WTC11 (cell line): ENCODE measurements at regions of chr19 and their contacts with region 1.

Region 1: DNA sequence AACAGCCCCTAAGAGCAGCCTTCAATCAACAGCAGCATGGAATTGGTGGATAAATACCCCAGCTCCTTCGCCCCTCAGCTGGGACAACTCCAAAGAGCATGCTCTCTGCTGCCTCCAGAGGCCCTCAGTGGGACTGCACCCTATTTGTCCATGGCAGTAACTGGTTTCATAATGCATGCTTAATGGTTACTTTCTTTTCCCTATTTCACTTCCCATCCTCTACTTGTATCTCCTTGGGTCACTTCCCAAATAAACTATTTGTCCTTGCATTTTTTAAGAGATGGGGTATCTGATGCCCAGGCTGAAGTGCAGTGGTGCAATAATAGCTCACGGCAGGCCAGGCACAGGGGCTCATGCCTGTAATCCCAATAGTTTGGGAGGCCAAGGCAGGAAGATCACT is 13.5 kb upstream of the TPM4 start:
- DNase-seq: peak; percentile 84
- ATAC-seq: peak; percentile 76
- H3K4me3 Mint-ChIP-seq: no peak overlapping the region
- H3K27ac Mint-ChIP-seq: no peak overlapping the region
- H3K4me1 Mint-ChIP-seq: peaks cover 16% of the 10 kb centered on the region
- H3K27me3 Mint-ChIP-seq: peaks cover 4% of the 10 kb centered on the region
- CTCF ChIP-seq: peak; percentile 95

Region 2: DNA sequence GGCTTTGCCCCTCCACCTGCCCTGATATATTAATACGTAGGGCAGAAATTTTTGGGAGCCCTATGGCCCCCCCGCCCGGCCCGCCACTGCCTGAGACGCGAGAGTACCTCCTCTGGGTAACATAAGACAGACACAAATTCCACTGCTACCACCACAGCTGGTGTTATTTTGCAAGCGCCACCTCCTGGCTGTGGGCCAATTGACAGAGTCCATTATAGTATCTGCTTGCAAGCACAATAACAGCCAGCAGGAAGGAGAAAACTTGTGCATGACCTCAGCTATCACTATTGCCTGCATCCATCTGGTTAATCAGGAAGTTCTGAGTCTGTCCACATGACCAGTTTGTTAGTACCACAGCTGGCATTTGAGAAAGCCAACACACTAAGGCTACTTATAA is 360.3 kb before region 1 on chr19:
- CTCF ChIA-PET with region 1: no interaction called
- POLR2A ChIA-PET with region 1: no interaction called
- DNase-seq: no peak
- ATAC-seq: no peak
- H3K4me3 Mint-ChIP-seq: no peak overlapping the region
- H3K27ac Mint-ChIP-seq: no peak overlapping the region
- H3K4me1 Mint-ChIP-seq: no peaks in the 10 kb centered on the region
- H3K27me3 Mint-ChIP-seq: peaks cover 5% of the 10 kb centered on the region
- CTCF ChIP-seq: no peak

Region 3: GRCh38 chr19:15863272-15863671 is 199.5 kb before region 1 on chr19:
- CTCF ChIA-PET with region 1: no interaction called
- POLR2A ChIA-PET with region 1: no interaction called
- DNase-seq: no peak
- ATAC-seq: no peak
- H3K4me3 Mint-ChIP-seq: no peak overlapping the region
- H3K27ac Mint-ChIP-seq: no peak overlapping the region
- H3K4me1 Mint-ChIP-seq: no peaks in the 10 kb centered on the region
- H3K27me3 Mint-ChIP-seq: no peaks in the 10 kb centered on the region; the same call in 1 of the 2 replicates
- CTCF ChIP-seq: no peak

Region 4: DNA sequence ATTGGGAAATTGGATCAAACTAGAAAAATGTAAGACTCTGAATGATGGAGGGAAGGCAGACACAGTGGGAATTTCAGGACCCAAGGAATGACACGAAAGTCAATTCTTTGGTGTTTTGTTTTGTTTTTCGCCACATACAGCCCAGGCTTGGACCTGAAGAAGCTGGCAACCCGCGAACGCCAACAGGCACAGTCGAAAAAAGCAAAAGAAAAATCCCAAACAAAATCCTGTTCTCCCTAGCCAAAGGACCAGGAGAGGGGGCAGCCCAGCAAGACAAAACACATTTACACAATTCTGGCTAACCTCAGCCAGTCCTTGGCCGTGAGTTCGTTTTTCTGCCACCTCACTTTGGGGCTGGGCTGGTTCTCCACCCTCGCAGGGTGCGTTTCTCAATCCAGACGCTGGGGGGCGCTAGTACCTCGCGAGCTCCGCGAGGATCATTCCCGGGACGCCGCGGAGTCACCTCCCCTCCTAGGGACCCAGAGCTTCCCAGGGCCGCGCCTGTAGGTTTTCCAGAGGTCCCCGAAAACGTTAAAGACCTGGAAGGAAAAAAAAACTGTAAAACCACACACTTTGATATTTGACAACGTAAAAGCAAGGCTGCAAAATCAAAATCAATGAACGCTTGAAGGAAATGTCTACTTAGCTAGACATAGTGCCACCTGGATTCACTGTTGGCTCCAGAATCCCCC is 21.3 kb before region 1 on chr19:
- CTCF ChIA-PET with region 1: interaction called, 33 read pairs
- POLR2A ChIA-PET with region 1: no interaction called
- DNase-seq: peak; percentile 93
- ATAC-seq: peak; percentile 96
- H3K4me3 Mint-ChIP-seq: peak overlapping the region; percentile 38
- H3K27ac Mint-ChIP-seq: no peak overlapping the region
- H3K4me1 Mint-ChIP-seq: 0 out of 2 replicates have a peak, but pooled peaks cover 3% of the 10 kb centered on the region
- H3K27me3 Mint-ChIP-seq: peaks cover 8% of the 10 kb centered on the region
- CTCF ChIP-seq: peak; percentile 97

Region 5: DNA sequence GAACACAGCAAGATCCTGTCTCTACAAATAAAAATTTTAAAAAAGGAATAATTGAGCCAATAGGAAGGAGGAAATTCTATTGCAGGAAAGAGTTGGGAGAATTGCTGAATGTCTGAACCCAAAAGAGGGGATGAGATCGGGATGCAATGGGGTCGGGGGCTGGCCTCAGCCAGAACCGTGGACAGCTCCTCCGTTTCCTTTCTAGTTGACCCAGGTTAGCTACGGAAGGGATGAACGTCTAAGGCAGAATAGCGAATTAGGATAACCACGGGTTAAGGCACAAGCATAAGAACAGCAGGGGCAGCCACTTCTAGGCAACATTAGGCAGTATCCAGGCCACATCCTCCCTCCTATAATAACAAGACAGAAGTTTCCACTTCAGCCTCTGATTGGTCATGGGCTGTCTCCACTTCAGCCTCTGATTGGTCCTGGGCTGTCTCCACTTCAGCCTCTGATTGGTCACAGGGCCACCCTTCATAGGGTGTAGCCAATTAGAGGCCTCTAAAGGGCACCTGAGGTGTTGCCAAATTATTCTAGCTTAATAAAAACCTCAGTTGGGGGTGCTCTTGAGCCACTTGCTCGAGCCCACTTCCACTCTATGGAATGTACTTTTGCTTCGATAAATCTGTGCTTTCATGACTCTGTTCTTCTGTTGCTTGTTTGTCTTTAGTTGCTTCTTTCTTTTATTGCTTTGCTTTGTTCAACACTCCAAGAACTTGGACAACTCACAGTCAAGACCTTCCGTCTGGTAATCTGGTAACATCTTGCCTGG is 11.3 kb before region 1 on chr19:
- CTCF ChIA-PET with region 1: interaction called, 25 read pairs
- POLR2A ChIA-PET with region 1: no interaction called
- DNase-seq: no peak
- ATAC-seq: peak; percentile 87
- H3K4me3 Mint-ChIP-seq: no peak overlapping the region
- H3K27ac Mint-ChIP-seq: no peak overlapping the region
- H3K4me1 Mint-ChIP-seq: no peaks in the 10 kb centered on the region
- H3K27me3 Mint-ChIP-seq: peaks cover 15% of the 10 kb centered on the region
- CTCF ChIP-seq: no peak

Region 6: GRCh38 chr19:16076154-16076957 is 13.6 kb after region 1 on chr19 and contains the start of gene TPM4:
- CTCF ChIA-PET with region 1: interaction called, 100 read pairs
- POLR2A ChIA-PET with region 1: interaction called, 14 read pairs
- DNase-seq: peak; percentile 89
- ATAC-seq: peak; percentile 76
- H3K4me3 Mint-ChIP-seq: peak within 1 kb of the TSS; percentile 85
- H3K27ac Mint-ChIP-seq: peak within 1 kb of the TSS; percentile 98
- H3K4me1 Mint-ChIP-seq: peaks cover 56% of the 10 kb centered on the region
- H3K27me3 Mint-ChIP-seq: no peaks in the 10 kb centered on the region
- CTCF ChIP-seq: no peak
- total RNA-seq, gene TPM4: 302 to 327 TPM (median 323 TPM) in 3 replicates

Region 7: GRCh38 chr19:16111160-16111908 is 48.5 kb after region 1 on chr19 and contains the start of gene RAB8A:
- CTCF ChIA-PET with region 1: interaction called, 10 read pairs
- POLR2A ChIA-PET with region 1: no interaction called
- DNase-seq: peak; percentile 97
- ATAC-seq: peak; percentile 95
- H3K4me3 Mint-ChIP-seq: peak within 1 kb of the TSS; percentile 96
- H3K27ac Mint-ChIP-seq: peak within 1 kb of the TSS; percentile 96
- H3K4me1 Mint-ChIP-seq: peaks cover 13% of the 10 kb centered on the region
- H3K27me3 Mint-ChIP-seq: peaks cover 2% of the 10 kb centered on the region; the same call in 1 of the 2 replicates
- CTCF ChIP-seq: peak; percentile 86
- total RNA-seq, gene RAB8A: 68.4 to 81.8 TPM (median 74.0 TPM) in 3 replicates

Region 8: DNA sequence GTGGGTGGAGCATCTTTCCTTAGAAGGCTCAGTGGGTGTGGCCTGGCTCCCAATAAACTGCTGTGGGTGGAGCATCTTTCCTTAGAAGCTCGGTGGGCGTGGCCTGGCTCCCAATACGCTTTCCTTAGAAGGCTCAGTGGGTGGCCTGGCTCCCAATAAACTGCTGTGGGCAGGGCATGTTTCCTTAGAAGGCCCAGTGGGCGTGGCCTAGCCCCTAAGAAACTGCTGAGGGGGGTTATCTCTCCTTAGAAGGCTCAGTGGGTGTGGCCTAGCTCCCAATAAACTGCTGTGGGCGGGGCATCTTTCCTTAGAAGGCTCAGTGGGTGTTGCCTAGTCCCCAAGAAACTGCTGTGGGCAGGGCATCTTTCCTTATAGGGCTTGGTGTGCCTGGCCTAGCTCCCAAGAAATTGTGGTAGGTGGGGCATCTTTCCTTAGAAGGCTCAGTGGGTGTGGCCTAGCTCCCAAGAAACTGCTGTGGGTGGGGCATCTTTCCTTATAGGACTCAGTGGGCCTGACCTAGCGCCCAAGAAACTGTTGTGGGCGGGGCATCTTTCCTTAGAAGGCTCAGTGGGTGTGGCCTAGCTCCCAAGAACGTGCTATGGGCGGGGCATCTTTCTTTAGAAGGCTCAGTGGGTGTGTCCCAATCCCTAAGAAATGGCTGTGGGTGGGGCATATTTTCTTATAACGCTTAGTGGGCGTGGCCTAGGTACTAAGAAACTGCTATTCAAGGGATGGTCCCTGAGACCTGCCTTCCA is 91.0 kb after region 1 on chr19:
- CTCF ChIA-PET with region 1: interaction called, 11 read pairs
- POLR2A ChIA-PET with region 1: no interaction called
- DNase-seq: peak; percentile 56
- ATAC-seq: peak; percentile 50; the same call in 1 of the 2 replicates
- H3K4me3 Mint-ChIP-seq: no peak overlapping the region
- H3K27ac Mint-ChIP-seq: no peak overlapping the region
- H3K4me1 Mint-ChIP-seq: no peaks in the 10 kb centered on the region
- H3K27me3 Mint-ChIP-seq: no peaks in the 10 kb centered on the region; the same call in 1 of the 2 replicates
- CTCF ChIP-seq: no peak